Activated B cell treated with CpG ODN at 0.5 μM for 24 hours (primary cell): ENCODE measurements at regions of chr9 and their contacts with region 1.

Region 1: DNA sequence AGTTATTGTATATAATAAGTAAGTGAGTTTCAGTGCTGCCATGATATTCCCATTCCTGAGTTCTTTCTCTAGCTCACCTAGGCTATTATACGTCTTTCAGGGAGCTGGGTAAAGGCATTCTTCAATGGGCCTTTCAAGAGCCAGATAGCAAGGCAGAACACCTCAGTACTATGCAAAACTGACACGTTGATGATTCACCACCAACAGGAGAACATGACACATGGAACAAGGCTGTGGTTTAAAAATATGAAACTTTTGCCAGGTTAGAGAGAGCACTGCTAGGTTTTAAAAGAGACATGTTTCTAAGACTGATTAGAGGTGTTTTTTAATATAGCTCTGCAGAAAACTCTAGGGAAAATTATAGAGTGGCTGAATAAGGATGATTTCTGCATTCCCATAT is 95.9 kb downstream of the UGCG start:
- DNase-seq: no peak
- ATAC-seq: peak; percentile 92
- H3K4me3 Mint-ChIP-seq: no peak overlapping the region
- H3K27ac Mint-ChIP-seq: peak overlapping the region; percentile 79
- H3K4me1 Mint-ChIP-seq: peaks cover 47% of the 10 kb centered on the region
- H3K27me3 Mint-ChIP-seq: no peaks in the 10 kb centered on the region
- CTCF ChIP-seq: no peak

Region 2: GRCh38 chr9:111957856-111958652 is 34.5 kb before region 1 on chr9:
- CTCF ChIA-PET with region 1: no interaction called
- POLR2A ChIA-PET with region 1: interaction called, 5 read pairs
- intact Hi-C with region 1: loop called (anchors 5 kb)
- DNase-seq: no peak
- ATAC-seq: peak; percentile 62
- H3K4me3 Mint-ChIP-seq: peak overlapping the region; percentile 45
- H3K27ac Mint-ChIP-seq: peak overlapping the region; percentile 79
- H3K4me1 Mint-ChIP-seq: peaks cover 51% of the 10 kb centered on the region
- H3K27me3 Mint-ChIP-seq: no peaks in the 10 kb centered on the region
- CTCF ChIP-seq: no peak

Region 3: GRCh38 chr9:112012026-112012902 is 19.7 kb after region 1 on chr9:
- CTCF ChIA-PET with region 1: interaction called, 3 read pairs
- POLR2A ChIA-PET with region 1: interaction called, 82 read pairs
- intact Hi-C with region 1: loop called (anchors 1 kb)
- DNase-seq: no peak
- ATAC-seq: peak; percentile 85
- H3K4me3 Mint-ChIP-seq: peak overlapping the region; percentile 47
- H3K27ac Mint-ChIP-seq: peak overlapping the region; percentile 93
- H3K4me1 Mint-ChIP-seq: peaks cover 84% of the 10 kb centered on the region
- H3K27me3 Mint-ChIP-seq: no peaks in the 10 kb centered on the region
- CTCF ChIP-seq: no peak